ENCODE measurements at regions of chr11 and their contacts with region 1.

Region 1: DNA sequence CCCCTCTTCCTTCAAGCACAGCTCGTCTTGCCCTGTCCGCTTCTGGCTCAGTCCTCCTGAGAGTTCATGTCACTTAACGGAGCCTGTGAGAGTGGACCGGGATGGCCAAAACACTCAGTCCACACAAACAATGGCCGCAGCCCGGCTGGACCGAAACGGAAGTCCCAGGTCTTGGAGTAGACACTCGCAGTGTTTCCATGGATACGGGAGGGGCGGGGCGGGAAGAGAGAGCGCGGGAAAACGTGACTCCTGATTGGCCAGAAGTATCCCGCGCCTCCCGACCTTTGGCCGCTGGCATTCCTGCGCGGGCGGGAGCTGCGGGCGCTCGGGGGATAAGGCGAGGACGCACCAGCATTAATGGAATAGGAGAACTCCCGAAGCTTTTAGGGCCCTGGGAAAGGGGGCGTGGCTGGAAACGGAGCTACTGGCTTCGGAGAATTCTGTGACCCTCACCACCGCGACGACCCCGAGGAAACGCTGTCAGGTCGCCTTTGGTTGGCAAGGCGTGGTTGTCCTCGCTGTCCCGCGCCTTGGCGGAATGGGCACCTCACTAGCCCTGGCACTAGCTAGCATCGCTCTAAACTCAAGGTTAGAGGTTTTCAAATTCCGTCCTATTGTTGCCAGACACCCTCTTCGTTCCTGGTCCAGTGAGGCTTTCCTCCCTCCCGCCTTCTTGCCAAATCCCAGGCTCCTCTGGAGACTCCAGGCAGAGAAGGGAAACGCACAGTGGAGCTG is at the starts of genes NLRP14 and ZNF214:
- DNase-seq: peak; percentile 96
- H3K4me3 ChIP-seq: peak within 1 kb of the TSS; percentile 54 to 74 (median 64)
- H3K27ac ChIP-seq: peak within 1 kb of the TSS; percentile 76 to 85 (median 81)
- H3K4me1 ChIP-seq: peaks cover 0 to 13% (median 9%) of the 10 kb centered on the region in 4 donors
- H3K27me3 ChIP-seq: no peaks in the 10 kb centered on the region
- CTCF ChIP-seq: no peak
- EP300 ChIP-seq: no peak
- POLR2A ChIP-seq: no peak
- total RNA-seq, gene NLRP14: 0.36 TPM in 1 of 4 donors, not detected in the others
- total RNA-seq, gene ZNF214: 1.9 to 3.1 (median 2.5) TPM

Region 2: DNA sequence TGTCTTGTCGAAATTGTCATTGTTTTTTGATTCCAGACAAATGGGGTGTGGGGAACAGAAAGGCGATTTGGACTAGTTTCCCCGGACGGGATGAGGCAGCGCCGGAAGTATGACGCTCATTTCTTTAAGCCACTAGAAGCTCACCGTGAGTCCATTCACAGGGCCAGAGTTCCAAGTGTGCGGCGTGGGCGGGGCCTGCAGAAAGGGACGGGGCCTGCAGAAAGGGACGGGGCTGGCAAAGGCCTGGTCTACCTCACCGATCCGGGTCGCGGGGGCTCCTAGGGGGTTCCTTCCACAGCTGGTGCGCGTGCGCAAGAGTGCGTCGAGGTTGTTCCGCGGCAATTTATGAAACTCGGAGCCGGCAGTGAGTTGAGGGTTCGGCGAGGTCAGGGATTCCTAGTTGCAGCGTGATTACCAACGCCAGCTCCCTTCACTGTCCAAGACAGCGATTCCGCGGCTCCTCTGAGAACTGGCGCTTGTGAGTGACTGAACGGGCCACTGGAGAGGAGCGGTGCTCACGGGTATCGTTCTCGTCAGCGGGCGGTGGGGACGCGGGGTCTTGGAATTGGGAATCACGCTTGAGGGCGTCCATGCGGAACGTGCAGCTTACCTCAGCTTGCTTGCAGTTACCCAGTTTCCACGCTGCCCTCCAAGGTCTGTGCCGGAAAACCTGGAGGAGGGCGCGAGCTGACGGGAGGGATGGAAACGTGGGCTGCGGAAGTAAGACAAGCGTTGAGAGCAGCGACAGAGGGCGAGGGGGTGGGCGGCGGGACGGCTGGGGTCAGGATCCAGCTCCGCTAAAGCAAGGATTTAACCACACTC is 93.9 kb before region 1 on chr11 and contains the start of gene ZNF215:
- intact Hi-C with region 1: loop called (anchors 1 kb)
- DNase-seq: peak; percentile 85
- H3K4me3 ChIP-seq: peak within 1 kb of the TSS; percentile 43 to 70 (median 56)
- H3K27ac ChIP-seq: peak within 1 kb of the TSS; percentile 38 to 67 (median 64)
- H3K4me1 ChIP-seq: peaks cover 0 to 15% (median 10%) of the 10 kb centered on the region in 4 donors
- H3K27me3 ChIP-seq: no peaks in the 10 kb centered on the region
- CTCF ChIP-seq: no peak
- EP300 ChIP-seq: no peak
- POLR2A ChIP-seq: no peak
- total RNA-seq, gene ZNF215: 0.41 to 3.0 (median 0.78) TPM

Region 3: GRCh38 chr11:6979365-6979978 is 40.9 kb before region 1 on chr11:
- intact Hi-C with region 1: no loop called
- DNase-seq: no peak
- H3K4me3 ChIP-seq: no peak overlapping the region
- H3K27ac ChIP-seq: no peak overlapping the region
- H3K4me1 ChIP-seq: no peaks in the 10 kb centered on the region
- H3K27me3 ChIP-seq: no peaks in the 10 kb centered on the region
- CTCF ChIP-seq: no peak
- EP300 ChIP-seq: no peak
- POLR2A ChIP-seq: no peak

Region 4: GRCh38 chr11:6992457-6993417 is 27.6 kb before region 1 on chr11:
- intact Hi-C with region 1: loop called (anchors 2 kb)
- DNase-seq: no peak
- H3K4me3 ChIP-seq: peak overlapping the region in 2 of 4 donors; percentile 11 to 22
- H3K27ac ChIP-seq: peak overlapping the region; percentile 31 to 80 (median 70)
- H3K4me1 ChIP-seq: peaks cover 0 to 15% (median 12%) of the 10 kb centered on the region in 4 donors
- H3K27me3 ChIP-seq: no peaks in the 10 kb centered on the region
- CTCF ChIP-seq: no peak
- EP300 ChIP-seq: peak in 2 of 4 donors; percentile 36 to 80
- POLR2A ChIP-seq: no peak

Region 5: GRCh38 chr11:7138051-7138450 is 117.7 kb after region 1 on chr11:
- intact Hi-C with region 1: no loop called
- DNase-seq: no peak
- H3K4me3 ChIP-seq: no peak overlapping the region
- H3K27ac ChIP-seq: no peak overlapping the region
- H3K4me1 ChIP-seq: no peaks in the 10 kb centered on the region
- H3K27me3 ChIP-seq: no peaks in the 10 kb centered on the region
- CTCF ChIP-seq: no peak
- EP300 ChIP-seq: no peak
- POLR2A ChIP-seq: no peak